PC-9 (cell line): ENCODE measurements at regions of chr16 and their contacts with region 1.

Region 1: DNA sequence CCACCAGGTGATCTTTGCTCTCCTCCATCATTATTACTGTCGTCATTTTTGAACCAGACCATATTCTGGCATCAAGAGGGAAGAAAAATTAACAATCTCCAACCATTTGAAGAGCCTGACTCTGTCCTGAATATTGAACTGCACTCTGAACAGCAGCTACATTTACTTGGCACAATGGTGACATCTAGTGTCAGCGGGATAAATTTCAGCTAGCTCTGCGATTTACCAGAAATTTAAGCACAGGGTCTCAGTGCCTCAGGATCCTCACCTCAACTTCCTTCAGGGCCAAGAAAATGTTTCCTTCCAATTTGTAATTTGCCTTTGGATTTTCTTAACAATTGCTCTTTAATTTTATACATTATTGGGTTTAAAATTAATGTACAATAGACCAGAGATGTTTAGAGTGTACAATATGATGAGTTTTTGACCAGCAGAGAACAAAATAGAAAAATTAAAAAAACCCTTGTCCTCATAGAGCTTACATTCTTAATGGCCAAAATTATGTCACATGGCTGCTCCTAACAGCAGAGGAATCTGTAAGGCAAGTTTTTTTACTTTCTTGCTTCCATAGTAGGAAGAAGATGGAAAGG is 10.7 kb upstream of the ZNF19 start:
- DNase-seq: peak; percentile 40 to 56
- H3K4me3 ChIP-seq: no peak overlapping the region
- H3K27ac ChIP-seq: no peak overlapping the region
- H3K4me1 ChIP-seq: peaks cover 5% of the 10 kb centered on the region
- H3K27me3 ChIP-seq: no peaks in the 10 kb centered on the region
- CTCF ChIP-seq: peak; percentile 85

Region 2: GRCh38 chr16:71412270-71413160 is 87.4 kb before region 1 on chr16:
- CTCF ChIA-PET with region 1: interaction called, 7 read pairs
- POLR2A ChIA-PET with region 1: no interaction called
- intact Hi-C with region 1: loop called (anchors 1 kb)
- DNase-seq: peak; percentile 64 to 79
- H3K4me3 ChIP-seq: peak overlapping the region; percentile 20; the same call in 1 of the 2 replicates
- H3K27ac ChIP-seq: no peak overlapping the region
- H3K4me1 ChIP-seq: 0 out of 2 replicates have a peak, but pooled peaks cover 3% of the 10 kb centered on the region
- H3K27me3 ChIP-seq: peaks cover 20% of the 10 kb centered on the region; the same call in 1 of the 2 replicates
- CTCF ChIP-seq: peak; percentile 90

Region 3: GRCh38 chr16:71552698-71553451 is 53.0 kb after region 1 on chr16:
- CTCF ChIA-PET with region 1: no interaction called
- POLR2A ChIA-PET with region 1: no interaction called
- intact Hi-C with region 1: no loop called
- DNase-seq: peak in 1 of 2 experiments; percentile 49
- H3K4me3 ChIP-seq: no peak overlapping the region
- H3K27ac ChIP-seq: no peak overlapping the region
- H3K4me1 ChIP-seq: 0 out of 2 replicates have a peak, but pooled peaks cover 8% of the 10 kb centered on the region
- H3K27me3 ChIP-seq: peaks cover 13% of the 10 kb centered on the region
- CTCF ChIP-seq: peak; percentile 62